Activated CD4-positive, alpha-beta T cell treated with anti-CD3 and anti-CD28 coated beads for 36 hours (primary cell): ENCODE measurements at regions of chr11 and their contacts with region 1.

Region 1: DNA sequence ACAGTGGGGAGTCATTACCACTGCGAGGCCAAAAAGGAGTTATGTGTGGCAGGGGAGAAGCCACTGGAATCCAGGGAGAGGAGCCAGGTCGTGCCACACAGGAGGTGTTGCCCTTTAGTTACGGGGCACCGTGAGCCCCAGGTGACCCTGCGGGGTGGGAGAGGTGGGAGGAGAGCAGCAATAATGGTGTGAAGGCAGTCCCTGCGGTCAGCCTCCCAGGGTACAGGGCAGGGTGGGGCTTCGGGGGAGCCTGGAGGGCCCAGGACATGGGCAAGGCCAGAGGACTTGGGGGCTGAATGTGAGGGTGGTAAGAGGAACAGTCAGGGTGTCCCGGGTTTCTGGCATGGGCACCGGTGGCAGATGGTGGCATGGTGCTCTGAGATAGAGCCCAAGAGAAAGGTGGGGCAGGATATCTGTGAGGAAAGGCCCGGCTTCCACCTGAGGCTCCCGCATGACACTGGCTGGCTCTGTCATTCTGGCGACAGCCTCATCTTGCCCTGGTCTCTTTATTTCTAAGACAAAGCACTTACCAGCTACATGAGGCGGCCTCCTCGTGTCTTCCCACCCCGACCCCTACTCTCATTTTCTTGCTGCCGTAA is 82.6 kb upstream of the LMO1 start:
- DNase-seq: no peak
- ATAC-seq: no peak
- H3K4me3 Mint-ChIP-seq: no peak overlapping the region
- H3K27ac Mint-ChIP-seq: no peak overlapping the region
- H3K4me1 Mint-ChIP-seq: peaks cover 9% of the 10 kb centered on the region
- H3K27me3 Mint-ChIP-seq: no peaks in the 10 kb centered on the region

Region 2: GRCh38 chr11:8384199-8384821 is 38.1 kb after region 1 on chr11:
- CTCF ChIA-PET with region 1: no interaction called
- POLR2A ChIA-PET with region 1: no interaction called
- intact Hi-C with region 1: no loop called
- DNase-seq: no peak
- ATAC-seq: no peak
- H3K4me3 Mint-ChIP-seq: no peak overlapping the region
- H3K27ac Mint-ChIP-seq: no peak overlapping the region
- H3K4me1 Mint-ChIP-seq: no peaks in the 10 kb centered on the region
- H3K27me3 Mint-ChIP-seq: peaks cover 2% of the 10 kb centered on the region

Region 3: DNA sequence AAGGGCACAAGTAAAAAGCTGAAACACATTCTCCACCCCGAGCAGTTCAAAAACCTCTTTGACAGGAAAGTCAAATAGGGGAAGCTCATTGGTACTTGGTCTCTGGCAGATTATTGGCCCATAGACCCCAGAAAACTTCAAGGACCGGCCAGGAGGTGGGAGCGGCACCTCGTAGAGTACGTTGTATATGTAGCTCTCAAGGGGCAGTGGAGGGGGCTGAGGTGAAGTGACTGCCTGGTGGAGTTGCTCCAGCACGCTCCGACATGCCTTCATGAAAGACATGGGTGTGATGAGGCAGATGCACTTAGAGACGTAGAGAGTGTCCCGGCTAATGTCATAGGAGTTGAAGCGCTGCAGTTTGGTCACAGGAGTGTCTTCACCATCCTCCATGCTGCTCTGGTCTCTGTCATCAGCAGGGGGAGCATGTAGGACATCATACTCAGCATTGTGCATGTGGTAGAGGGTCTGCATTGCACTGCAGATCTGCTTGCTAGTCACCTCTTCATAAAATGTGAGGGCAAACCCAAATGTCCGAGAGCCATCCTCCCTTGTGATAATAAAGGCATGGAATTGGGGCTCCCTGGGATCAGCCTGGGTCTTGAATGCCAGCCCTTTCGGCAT is 857.5 kb after region 1 on chr11:
- CTCF ChIA-PET with region 1: no interaction called
- POLR2A ChIA-PET with region 1: no interaction called
- intact Hi-C with region 1: loop called in 1 of 2 experiments (anchors 5 kb)
- DNase-seq: no peak
- ATAC-seq: peak; percentile 47
- H3K4me3 Mint-ChIP-seq: no peak overlapping the region
- H3K27ac Mint-ChIP-seq: no peak overlapping the region
- H3K4me1 Mint-ChIP-seq: peaks cover 36% of the 10 kb centered on the region
- H3K27me3 Mint-ChIP-seq: no peaks in the 10 kb centered on the region